SK-N-SH (cell line): ENCODE measurements at regions of chr10 and their contacts with region 1.

Region 1: DNA sequence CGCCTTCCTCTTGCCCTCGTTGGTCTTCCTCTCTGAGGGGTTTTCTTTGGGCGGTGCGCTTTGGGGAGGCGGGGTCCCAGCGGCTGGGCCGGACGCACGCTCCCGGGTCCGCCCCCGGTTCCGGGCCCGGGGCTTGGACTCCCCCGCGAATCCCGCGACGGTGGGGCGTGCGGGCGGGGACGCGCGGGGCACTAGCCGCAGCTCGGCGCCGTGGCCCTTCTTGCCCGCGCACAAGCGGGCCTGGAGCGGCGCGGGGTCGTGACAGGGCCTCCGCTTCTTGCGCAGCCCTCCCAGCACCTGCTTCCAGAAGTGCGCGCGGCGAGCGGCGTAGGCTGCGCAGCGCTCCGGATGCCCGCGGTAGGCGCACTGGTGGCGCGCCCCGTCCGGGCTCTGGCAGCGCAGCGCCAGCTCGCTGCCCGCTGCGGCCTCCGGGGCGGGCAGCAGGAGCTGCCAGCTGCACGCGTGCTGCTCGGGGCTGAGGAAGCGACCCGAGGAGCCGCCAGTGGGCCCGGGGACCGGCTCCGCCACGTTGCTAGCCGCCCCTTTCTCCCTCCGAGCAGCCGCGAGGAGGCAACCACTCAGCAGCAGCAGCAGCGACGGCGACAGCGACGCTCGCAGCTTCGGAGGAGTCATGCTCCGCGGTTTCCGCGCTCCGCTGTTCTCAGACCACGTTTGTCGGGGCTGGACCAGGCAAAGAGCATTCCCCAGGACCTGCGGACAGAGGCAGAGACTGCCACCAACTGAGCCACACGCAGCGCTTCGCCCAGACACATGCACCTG is 759 bp downstream of the FGFBP3 start:
- DNase-seq: peak; percentile 88
- H3K4me3 ChIP-seq: peak overlapping the region; percentile 74 to 80
- H3K27ac ChIP-seq: peak overlapping the region in 1 of 2 experiments; percentile 70; a peak in 2 of 4 replicates
- H3K4me1 ChIP-seq: peaks cover 2 to 3% of the 10 kb centered on the region in 2 experiments; a peak in 1 of 4 replicates
- H3K27me3 ChIP-seq: no peaks in the 10 kb centered on the region
- CTCF ChIP-seq: peak; percentile 48
- EP300 ChIP-seq: 0 out of 4 replicates have a peak, but pooled peaks of 1 of the 2 experiments have one; percentile 7
- RAD21 ChIP-seq: peak; percentile 44

Region 2: DNA sequence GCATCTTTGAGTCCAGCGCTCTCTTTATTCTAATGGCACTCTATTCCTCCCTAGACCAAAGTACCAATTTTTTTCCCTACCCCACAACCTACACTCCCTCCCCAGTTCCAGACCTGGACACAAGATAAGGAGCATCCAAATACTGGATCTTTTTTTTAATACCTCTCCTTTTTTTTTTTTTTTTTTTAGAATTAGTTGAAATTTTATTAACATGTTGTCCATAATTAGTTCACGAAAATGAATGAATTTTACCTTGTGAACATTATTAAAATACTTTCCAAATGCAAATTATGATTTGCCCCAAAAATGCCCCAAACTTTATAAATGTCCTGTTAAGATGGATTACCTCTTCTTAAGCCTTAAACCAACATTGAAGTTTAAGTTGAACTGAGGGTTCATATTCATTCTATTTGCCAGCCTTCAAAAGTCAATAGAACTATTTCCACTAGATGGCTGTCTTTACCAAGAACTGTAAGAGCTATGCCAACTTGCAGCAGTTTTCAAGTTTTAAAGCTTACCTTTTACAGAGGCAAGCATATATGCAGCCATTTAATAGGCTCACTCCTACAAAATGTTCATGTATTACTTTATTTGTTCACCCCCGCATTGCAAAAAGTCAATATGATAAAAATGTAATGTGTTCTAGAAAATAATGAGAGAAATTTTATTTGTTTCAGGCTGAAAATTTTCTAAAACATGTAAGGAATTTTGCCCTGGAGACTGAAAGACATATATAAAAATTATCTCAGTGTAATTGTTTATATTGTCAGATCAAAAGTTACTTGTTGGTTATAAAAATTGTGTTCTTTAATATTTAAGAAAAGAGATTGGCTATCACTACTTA is 150.0 kb before region 1 on chr10:
- CTCF ChIA-PET with region 1: interaction called, 49 read pairs
- POLR2A ChIA-PET with region 1: no interaction called
- DNase-seq: peak; percentile 36
- H3K4me3 ChIP-seq: no peak overlapping the region
- H3K27ac ChIP-seq: no peak overlapping the region
- H3K4me1 ChIP-seq: no peaks in the 10 kb centered on the region; a peak in 1 of 4 replicates
- H3K27me3 ChIP-seq: no peaks in the 10 kb centered on the region
- CTCF ChIP-seq: peak; percentile 68
- EP300 ChIP-seq: no peak
- RAD21 ChIP-seq: peak; percentile 91

Region 3: GRCh38 chr10:91856637-91857036 is 51.9 kb before region 1 on chr10:
- CTCF ChIA-PET with region 1: interaction called, 10 read pairs
- POLR2A ChIA-PET with region 1: no interaction called
- DNase-seq: no peak
- H3K4me3 ChIP-seq: no peak overlapping the region
- H3K27ac ChIP-seq: no peak overlapping the region
- H3K4me1 ChIP-seq: no peaks in the 10 kb centered on the region
- H3K27me3 ChIP-seq: no peaks in the 10 kb centered on the region
- CTCF ChIP-seq: peak; percentile 56
- EP300 ChIP-seq: no peak
- RAD21 ChIP-seq: peak; percentile 46

Region 4: DNA sequence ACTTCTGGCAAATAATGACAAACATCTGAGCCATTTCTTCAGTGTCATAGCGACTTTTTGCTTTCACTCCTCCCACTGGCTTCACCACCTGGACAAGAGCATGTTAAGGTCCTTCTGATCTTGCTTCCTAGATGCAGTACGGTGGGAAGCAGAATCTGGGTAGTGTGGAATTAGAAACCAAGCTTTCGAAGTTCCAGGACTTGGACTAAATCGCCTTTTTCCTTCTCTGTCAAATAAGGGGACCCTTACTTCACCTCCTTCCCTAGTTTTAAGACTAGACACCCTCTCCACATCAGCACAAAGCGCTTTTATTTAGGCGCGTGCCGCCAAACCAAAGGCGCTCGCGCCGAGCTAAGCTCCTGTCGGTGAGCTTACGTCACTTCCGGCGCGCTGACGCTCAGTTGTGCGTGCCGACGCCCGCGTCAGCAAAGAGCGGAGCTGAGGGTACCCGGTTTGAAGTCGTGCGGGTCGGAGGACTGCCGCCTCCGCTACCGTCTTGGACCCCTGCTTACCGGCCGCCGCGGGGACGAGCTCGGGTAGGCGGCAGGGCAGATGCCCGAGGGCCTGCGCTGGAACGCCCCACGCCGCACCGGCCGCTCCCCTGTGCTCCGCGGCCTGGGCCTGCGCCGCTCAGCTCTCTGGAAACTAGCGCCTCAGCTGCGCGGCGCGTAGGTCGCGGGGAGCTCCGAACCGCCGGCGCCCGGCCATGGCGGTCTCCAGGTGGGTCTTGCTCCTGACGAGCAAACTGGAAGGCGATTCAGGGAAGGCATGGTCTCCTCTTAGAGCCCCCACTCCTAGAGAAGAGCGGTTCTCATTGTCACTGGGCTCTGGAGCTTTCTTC is 15.1 kb after region 1 on chr10 and contains the start of gene BTAF1:
- CTCF ChIA-PET with region 1: interaction called, 11 read pairs
- POLR2A ChIA-PET with region 1: interaction called, 11 read pairs
- DNase-seq: peak; percentile 91
- H3K4me3 ChIP-seq: peak within 1 kb of the TSS; percentile 86 to 95
- H3K27ac ChIP-seq: peak within 1 kb of the TSS; percentile 85 to 95
- H3K4me1 ChIP-seq: peaks cover 0 to 6% of the 10 kb centered on the region in 2 experiments; a peak in 2 of 4 replicates
- H3K27me3 ChIP-seq: no peaks in the 10 kb centered on the region
- CTCF ChIP-seq: no peak
- EP300 ChIP-seq: no peak
- RAD21 ChIP-seq: no peak
- polyA plus RNA-seq, gene BTAF1: 9.8 and 17.4 TPM in 2 replicates

Region 5: GRCh38 chr10:91932737-91933136 is 24.2 kb after region 1 on chr10:
- CTCF ChIA-PET with region 1: interaction called, 14 read pairs
- POLR2A ChIA-PET with region 1: no interaction called
- DNase-seq: no peak
- H3K4me3 ChIP-seq: no peak overlapping the region
- H3K27ac ChIP-seq: no peak overlapping the region
- H3K4me1 ChIP-seq: peaks cover 0 to 7% of the 10 kb centered on the region in 2 experiments; a peak in 2 of 4 replicates
- H3K27me3 ChIP-seq: no peaks in the 10 kb centered on the region
- CTCF ChIP-seq: no peak
- EP300 ChIP-seq: no peak
- RAD21 ChIP-seq: no peak